ENCODE measurements at regions of chr1 and their contacts with region 1.

Region 1: DNA sequence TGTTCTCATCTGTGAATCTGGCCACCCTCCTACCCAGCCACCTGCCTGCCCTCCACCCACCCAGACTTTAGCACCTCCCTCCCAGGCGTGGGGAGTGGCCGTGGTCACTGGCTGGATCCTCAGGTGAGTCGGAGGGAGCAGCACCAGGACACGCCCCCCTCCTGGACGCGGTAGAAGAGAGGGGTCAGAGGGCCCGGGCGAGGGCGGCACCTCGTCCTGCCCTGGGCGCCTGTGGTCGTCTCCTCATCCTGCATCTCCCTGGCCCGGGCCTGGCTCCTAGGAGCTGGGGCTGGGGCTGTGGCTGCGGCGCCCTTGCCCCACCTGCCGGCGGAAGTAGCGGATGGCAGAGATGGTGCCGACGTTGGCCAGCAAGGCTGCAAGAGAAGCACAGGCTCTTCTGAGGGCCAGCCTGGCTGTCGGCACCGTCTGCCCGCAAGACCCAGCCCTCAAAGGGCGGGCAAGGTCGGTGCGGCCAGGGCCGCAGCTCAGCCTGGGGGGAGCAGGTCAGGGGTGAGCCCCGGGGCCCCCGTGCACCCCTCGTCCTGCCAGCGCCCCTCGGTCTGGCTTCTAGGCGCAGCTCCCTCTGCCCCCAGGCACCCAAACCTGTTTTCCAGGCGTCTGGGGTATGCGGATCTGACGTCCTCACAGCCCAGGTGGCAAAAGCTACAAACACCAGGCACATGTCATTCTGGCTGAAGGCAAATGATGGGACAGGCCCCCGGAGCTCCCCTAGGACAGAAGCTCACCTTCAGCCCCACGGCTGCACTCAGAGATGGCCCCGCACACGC is 5.8 kb downstream of the PERM1 start:
- DNase-seq: peak in 1 of 2 donors; percentile 70
- H3K4me3 ChIP-seq: peak overlapping the region in 1 of 2 donors; percentile 35
- H3K27ac ChIP-seq: peak overlapping the region in 1 of 2 donors; percentile 10
- H3K4me1 ChIP-seq: peaks cover 0 to 7% of the 10 kb centered on the region in 2 donors
- H3K27me3 ChIP-seq: peaks cover 5 to 11% of the 10 kb centered on the region in 2 donors
- CTCF ChIP-seq: peak in 3 of 4 experiments; percentile 52 to 81 (median 64)
- POLR2A ChIP-seq: no peak

Region 2: DNA sequence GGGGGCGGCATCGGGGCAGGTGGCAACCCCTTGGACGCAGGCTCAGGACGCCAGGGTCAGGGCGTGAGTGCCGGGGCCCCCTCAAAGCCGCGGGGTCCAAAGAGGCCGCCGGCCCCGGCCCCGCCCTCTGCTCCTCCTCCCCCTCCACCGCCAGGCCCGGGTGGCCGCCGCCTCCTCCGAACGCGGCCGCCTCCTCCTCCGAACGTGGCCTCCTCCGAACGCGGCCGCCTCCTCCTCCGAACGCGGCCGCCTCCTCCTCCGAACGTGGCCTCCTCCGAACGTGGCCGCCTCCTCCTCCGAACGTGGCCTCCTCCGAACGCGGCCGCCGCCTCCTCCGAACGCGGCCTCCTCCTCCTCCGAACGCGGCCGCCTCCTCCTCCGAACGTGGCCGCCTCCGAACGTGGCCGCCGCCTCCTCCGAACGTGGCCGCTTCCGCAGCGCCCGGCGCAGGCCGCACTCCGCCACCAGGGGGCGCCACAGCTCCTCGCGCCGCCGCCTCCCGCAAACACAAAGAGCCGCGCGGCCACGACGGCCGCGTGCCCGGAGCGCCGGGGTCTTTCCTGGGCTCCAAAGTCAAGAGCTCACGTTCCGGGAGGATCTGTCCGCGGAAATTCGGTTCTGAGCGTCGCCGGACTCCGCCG is 71.7 kb before region 1 on chr1:
- intact Hi-C with region 1: loop called (anchors 10 kb)
- DNase-seq: peak; percentile 62 to 88
- H3K4me3 ChIP-seq: peak overlapping the region in 1 of 2 donors; percentile 29
- H3K27ac ChIP-seq: no peak overlapping the region
- H3K4me1 ChIP-seq: no peaks in the 10 kb centered on the region
- H3K27me3 ChIP-seq: no peaks in the 10 kb centered on the region
- CTCF ChIP-seq: peak; percentile 73 to 98 (median 96)
- POLR2A ChIP-seq: no peak

Region 3: GRCh38 chr1:1231400-1232223 is 255.5 kb after region 1 on chr1 and contains the start of gene SDF4:
- intact Hi-C with region 1: loop called (anchors 10 kb)
- DNase-seq: peak; percentile 94 to 97
- H3K4me3 ChIP-seq: peak within 1 kb of the TSS; percentile 67 to 98
- H3K27ac ChIP-seq: peak within 1 kb of the TSS; percentile 70 to 93
- H3K4me1 ChIP-seq: peaks cover 0 to 27% of the 10 kb centered on the region in 2 donors
- H3K27me3 ChIP-seq: no peaks in the 10 kb centered on the region
- CTCF ChIP-seq: peak in 1 of 4 experiments; percentile 2
- POLR2A ChIP-seq: peak in 1 of 2 donors; percentile 51
- total RNA-seq, gene SDF4: 29.7 to 105 (median 50.3) TPM